CD8-positive, alpha-beta T cell (primary cell): ENCODE measurements at regions of chr2 and their contacts with region 1.

Region 1: DNA sequence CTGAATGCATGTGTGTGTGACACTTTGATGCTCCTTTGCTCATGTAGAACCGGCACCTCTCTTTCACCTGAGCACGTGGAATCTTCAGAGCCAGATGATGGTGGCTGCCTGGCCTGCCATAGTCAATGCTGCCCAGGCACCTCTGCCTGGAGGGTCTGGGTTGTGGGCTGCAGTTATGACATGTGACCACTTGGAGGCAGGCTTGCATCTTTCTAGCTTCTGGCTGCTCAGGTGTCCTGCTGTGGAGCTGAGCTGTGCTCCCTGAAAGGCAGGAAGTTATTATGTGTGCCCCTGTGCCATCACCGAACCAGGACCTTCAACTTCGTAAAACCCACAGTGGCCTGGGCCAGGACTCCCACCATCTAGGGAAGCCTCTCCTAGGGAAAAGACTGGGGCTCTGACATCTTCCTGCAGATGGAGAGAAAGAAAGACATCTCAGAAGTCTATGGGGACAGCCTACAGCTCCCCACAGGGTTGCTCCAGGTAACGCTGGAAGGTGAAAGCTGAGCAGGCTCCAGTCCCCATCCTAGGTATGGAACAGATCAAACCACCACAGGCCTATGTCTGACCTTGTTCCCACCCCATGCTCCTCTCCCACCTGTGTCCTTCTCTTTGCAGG is 30.2 kb downstream of the PSD4 start:
- DNase-seq: peak; percentile 60 to 87 (median 77)
- ATAC-seq: peak; percentile 95
- H3K4me3 ChIP-seq: no peak overlapping the region
- H3K4me3 Mint-ChIP-seq: peak overlapping the region; percentile 55
- H3K27ac ChIP-seq: peak overlapping the region in 1 of 2 experiments; percentile 54
- H3K27ac Mint-ChIP-seq: peak overlapping the region; percentile 88
- H3K4me1 ChIP-seq: peaks cover 8% of the 10 kb centered on the region
- H3K4me1 Mint-ChIP-seq: peaks cover 21% of the 10 kb centered on the region
- H3K27me3 ChIP-seq: no peaks in the 10 kb centered on the region
- H3K27me3 Mint-ChIP-seq: no peaks in the 10 kb centered on the region
- CTCF ChIP-seq: peak; percentile 71

Region 2: DNA sequence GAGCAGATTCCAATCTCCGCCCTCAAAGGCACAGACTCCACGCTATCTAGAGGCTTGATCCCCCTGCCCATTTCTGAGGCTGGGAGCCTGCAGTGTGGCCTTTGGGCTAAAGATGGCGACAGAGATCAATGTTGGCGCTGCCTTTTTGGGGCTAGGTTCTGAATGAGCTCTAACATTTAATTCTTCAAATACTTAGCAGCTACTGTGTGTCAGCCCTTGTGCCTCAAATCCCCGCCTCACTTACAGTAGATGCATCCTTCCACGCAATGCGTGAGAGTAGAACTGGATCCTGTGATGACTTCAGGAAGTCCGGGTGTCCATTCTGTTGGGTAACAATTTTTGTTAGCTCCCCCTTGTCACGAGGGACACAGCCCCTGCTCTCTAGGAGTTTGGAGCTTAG is 123.9 kb before region 1 on chr2:
- CTCF ChIA-PET with region 1: interaction called, 6 read pairs
- POLR2A ChIA-PET with region 1: no interaction called
- intact Hi-C with region 1: loop called (anchors 5 kb)
- DNase-seq: peak; percentile 1 to 58 (median 34)
- ATAC-seq: peak; percentile 44
- H3K4me3 ChIP-seq: no peak overlapping the region
- H3K4me3 Mint-ChIP-seq: no peak overlapping the region
- H3K27ac ChIP-seq: no peak overlapping the region
- H3K27ac Mint-ChIP-seq: no peak overlapping the region
- H3K4me1 ChIP-seq: peaks cover 7% of the 10 kb centered on the region
- H3K4me1 Mint-ChIP-seq: peaks cover 7% of the 10 kb centered on the region
- H3K27me3 ChIP-seq: no peaks in the 10 kb centered on the region
- H3K27me3 Mint-ChIP-seq: no peaks in the 10 kb centered on the region
- CTCF ChIP-seq: peak; percentile 67

Region 3: GRCh38 chr2:113181258-113182051 is 22.6 kb before region 1 on chr2:
- CTCF ChIA-PET with region 1: interaction called, 95 read pairs
- POLR2A ChIA-PET with region 1: no interaction called
- intact Hi-C with region 1: no loop called
- DNase-seq: peak in 3 of 9 experiments; percentile 24 to 51 (median 32)
- ATAC-seq: peak; percentile 15
- H3K4me3 ChIP-seq: peak overlapping the region; percentile 2 to 4
- H3K4me3 Mint-ChIP-seq: peak overlapping the region; percentile 87
- H3K27ac ChIP-seq: peak overlapping the region; percentile 23 to 62
- H3K27ac Mint-ChIP-seq: peak overlapping the region; percentile 93
- H3K4me1 ChIP-seq: peaks cover 100% of the 10 kb centered on the region
- H3K4me1 Mint-ChIP-seq: peaks cover 96% of the 10 kb centered on the region
- H3K27me3 ChIP-seq: no peaks in the 10 kb centered on the region
- H3K27me3 Mint-ChIP-seq: no peaks in the 10 kb centered on the region
- CTCF ChIP-seq: no peak

Region 4: DNA sequence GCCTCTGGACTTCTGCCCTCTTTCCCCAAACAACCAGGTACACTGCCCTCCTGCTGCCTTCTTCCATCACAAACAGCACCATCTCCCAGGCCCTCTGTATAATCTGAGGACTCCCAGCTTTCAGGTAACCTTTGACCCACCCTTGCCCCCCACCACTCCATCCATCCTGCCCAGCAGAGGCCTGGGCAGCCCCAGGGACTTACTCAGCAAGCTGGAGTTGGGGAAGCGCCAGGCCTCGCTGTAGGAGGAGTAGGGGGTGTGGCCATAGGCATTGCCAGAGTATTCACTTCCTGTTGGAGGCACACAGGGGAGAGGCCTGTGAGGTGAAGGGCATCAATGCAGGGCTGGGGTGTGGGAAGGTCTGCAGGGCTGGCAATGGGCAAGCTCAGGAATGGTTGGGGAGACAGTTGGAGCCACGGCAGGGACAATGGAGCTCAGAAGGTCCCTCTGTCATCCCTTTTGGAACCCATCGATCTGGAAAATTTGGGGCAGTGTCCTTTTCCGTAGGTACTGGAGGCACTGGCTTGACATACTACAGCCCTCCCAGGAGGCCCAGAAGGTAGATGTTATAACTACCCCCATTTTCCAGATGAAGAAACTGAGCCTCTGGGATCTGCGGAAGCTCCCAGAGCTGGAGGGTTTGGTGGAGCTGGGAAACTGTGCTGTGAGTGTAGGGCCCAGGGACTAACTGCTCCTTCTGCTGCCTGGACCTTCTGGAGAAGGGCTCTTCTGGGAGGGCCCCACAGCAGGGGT is 16.1 kb after region 1 on chr2:
- CTCF ChIA-PET with region 1: interaction called, 27 read pairs
- POLR2A ChIA-PET with region 1: no interaction called
- intact Hi-C with region 1: no loop called
- DNase-seq: no peak
- ATAC-seq: no peak
- H3K4me3 ChIP-seq: no peak overlapping the region
- H3K4me3 Mint-ChIP-seq: no peak overlapping the region
- H3K27ac ChIP-seq: no peak overlapping the region
- H3K27ac Mint-ChIP-seq: no peak overlapping the region
- H3K4me1 ChIP-seq: peaks cover 17% of the 10 kb centered on the region
- H3K4me1 Mint-ChIP-seq: peaks cover 19% of the 10 kb centered on the region
- H3K27me3 ChIP-seq: no peaks in the 10 kb centered on the region
- H3K27me3 Mint-ChIP-seq: peaks cover 2% of the 10 kb centered on the region
- CTCF ChIP-seq: no peak

Region 5: GRCh38 chr2:113248997-113249770 is 45.2 kb after region 1 on chr2:
- CTCF ChIA-PET with region 1: interaction called, 83 read pairs
- POLR2A ChIA-PET with region 1: interaction called, 3 read pairs
- intact Hi-C with region 1: loop called (anchors 1 kb)
- DNase-seq: peak; percentile 51 to 88 (median 74)
- ATAC-seq: peak; percentile 62
- H3K4me3 ChIP-seq: no peak overlapping the region
- H3K4me3 Mint-ChIP-seq: no peak overlapping the region
- H3K27ac ChIP-seq: peak overlapping the region in 1 of 2 experiments; percentile 25
- H3K27ac Mint-ChIP-seq: peak overlapping the region; percentile 12
- H3K4me1 ChIP-seq: peaks cover 47% of the 10 kb centered on the region
- H3K4me1 Mint-ChIP-seq: peaks cover 50% of the 10 kb centered on the region
- H3K27me3 ChIP-seq: no peaks in the 10 kb centered on the region
- H3K27me3 Mint-ChIP-seq: no peaks in the 10 kb centered on the region
- CTCF ChIP-seq: peak; percentile 94

Region 6: GRCh38 chr2:113390124-113390849 is 186.3 kb after region 1 on chr2:
- CTCF ChIA-PET with region 1: interaction called, 30 read pairs
- POLR2A ChIA-PET with region 1: no interaction called
- intact Hi-C with region 1: loop called (anchors 5 kb)
- DNase-seq: peak; percentile 23 to 88 (median 59)
- ATAC-seq: peak; percentile 99
- H3K4me3 ChIP-seq: peak overlapping the region; percentile 39 to 47
- H3K4me3 Mint-ChIP-seq: peak overlapping the region; percentile 78
- H3K27ac ChIP-seq: no peak overlapping the region
- H3K27ac Mint-ChIP-seq: peak overlapping the region; percentile 63
- H3K4me1 ChIP-seq: no peaks in the 10 kb centered on the region
- H3K4me1 Mint-ChIP-seq: peaks cover 13% of the 10 kb centered on the region
- H3K27me3 ChIP-seq: no peaks in the 10 kb centered on the region
- H3K27me3 Mint-ChIP-seq: peaks cover 5% of the 10 kb centered on the region
- CTCF ChIP-seq: peak; percentile 86